Prostate gland (tissue), 2 donors: ENCODE measurements at regions of chr7 and their contacts with region 1.

Region 1: DNA sequence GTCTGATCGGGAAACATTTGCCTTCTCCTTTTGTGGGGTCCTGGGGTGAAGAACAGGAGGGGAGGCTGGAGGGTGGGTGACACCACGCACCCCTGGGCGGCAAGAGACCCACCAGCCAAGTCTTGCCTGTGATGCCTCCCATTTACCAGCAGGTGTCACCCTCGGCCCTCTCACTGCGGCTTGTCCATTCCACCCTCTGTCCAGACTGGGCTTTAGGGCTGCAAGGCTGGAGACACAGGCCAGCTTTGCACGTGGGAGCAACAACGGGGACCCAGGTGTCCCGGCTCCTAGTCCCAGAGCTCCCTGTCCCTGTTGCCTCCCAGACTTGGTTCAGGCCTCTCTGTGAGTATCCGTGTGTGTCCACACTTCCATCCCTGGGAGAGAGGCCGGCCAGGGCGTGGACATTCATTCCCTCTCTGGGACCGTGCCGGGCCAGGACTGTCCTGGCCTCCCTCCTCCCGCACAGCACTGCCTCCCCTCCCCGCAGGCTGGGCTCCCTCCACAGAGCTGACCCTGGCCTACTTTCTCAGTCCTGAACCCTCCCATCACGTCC is 36.2 kb upstream of the GTF2IRD1 start:
- DNase-seq: peak; percentile 46
- H3K4me3 ChIP-seq: no peak overlapping the region
- H3K27ac ChIP-seq: no peak overlapping the region
- H3K4me1 ChIP-seq: no peaks in the 10 kb centered on the region
- H3K27me3 ChIP-seq: no peaks in the 10 kb centered on the region
- CTCF ChIP-seq: peak; percentile 88 to 98 (median 93)
- POLR2A ChIP-seq: no peak

Region 2: DNA sequence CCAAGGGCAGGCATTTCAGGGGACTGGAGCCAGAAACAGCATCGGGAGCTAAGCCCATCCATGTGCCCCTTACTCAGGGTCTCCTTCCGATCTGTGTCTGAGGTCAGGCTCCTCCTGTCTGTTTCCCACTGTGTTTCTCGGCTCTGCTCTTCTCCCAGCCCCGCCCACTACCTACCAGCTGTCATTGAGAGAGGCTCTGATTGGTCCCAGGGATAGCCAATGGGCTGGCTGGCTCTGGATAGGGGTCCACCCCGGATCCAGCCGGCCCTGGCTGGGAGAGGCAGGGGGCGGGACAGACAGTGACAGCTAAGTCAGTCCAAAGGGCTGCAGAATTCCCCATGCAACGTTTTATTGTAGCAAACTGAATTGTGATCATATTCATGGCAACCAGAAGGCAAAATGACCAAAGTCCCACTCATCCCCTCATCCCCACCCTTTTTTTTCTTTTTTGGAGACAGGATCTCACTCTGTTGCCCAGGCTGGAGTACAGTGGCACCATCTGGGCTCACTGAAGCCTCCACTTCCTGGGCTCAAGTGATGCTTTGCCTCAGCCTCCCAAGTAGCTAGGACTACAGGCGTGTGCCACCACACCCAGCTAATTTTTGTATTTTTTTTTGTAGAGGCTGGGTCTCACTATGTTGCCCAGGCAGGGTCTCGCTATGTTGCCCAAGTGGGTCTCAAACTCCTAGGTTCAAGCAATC is 52.0 kb before region 1 on chr7:
- intact Hi-C with region 1: no loop called
- DNase-seq: no peak
- H3K4me3 ChIP-seq: no peak overlapping the region
- H3K27ac ChIP-seq: no peak overlapping the region
- H3K4me1 ChIP-seq: no peaks in the 10 kb centered on the region
- H3K27me3 ChIP-seq: no peaks in the 10 kb centered on the region
- CTCF ChIP-seq: no peak
- POLR2A ChIP-seq: no peak

Region 3: GRCh38 chr7:74561898-74562613 is 144.6 kb after region 1 on chr7:
- intact Hi-C with region 1: loop called (anchors 5 kb)
- DNase-seq: no peak
- H3K4me3 ChIP-seq: no peak overlapping the region
- H3K27ac ChIP-seq: no peak overlapping the region
- H3K4me1 ChIP-seq: no peaks in the 10 kb centered on the region
- H3K27me3 ChIP-seq: no peaks in the 10 kb centered on the region
- CTCF ChIP-seq: no peak
- POLR2A ChIP-seq: no peak